H1 (cell line): ENCODE measurements at regions of chr15 and their contacts with region 1.

Region 1: GRCh38 chr15:41180206-41180789 is 50.3 kb downstream of the EXD1 start:
- DNase-seq: no peak
- H3K4me3 ChIP-seq: no peak overlapping the region
- H3K27ac ChIP-seq: no peak overlapping the region
- H3K4me1 ChIP-seq: peaks cover 0 to 3% (median 1%) of the 10 kb centered on the region in 4 experiments; a peak in 4 of 7 replicates
- H3K27me3 ChIP-seq: no peaks in the 10 kb centered on the region
- CTCF ChIP-seq: no peak
- EP300 ChIP-seq: no peak
- POLR2A ChIP-seq: no peak
- RAD21 ChIP-seq: no peak

Region 2: GRCh38 chr15:41194444-41194843 is 14.1 kb after region 1 on chr15:
- CTCF ChIA-PET with region 1: interaction called, 11 read pairs
- POLR2A ChIA-PET with region 1: interaction called, 7 read pairs
- DNase-seq: no peak
- H3K4me3 ChIP-seq: no peak overlapping the region
- H3K27ac ChIP-seq: no peak overlapping the region
- H3K4me1 ChIP-seq: no peaks in the 10 kb centered on the region
- H3K27me3 ChIP-seq: no peaks in the 10 kb centered on the region
- CTCF ChIP-seq: no peak
- EP300 ChIP-seq: no peak
- POLR2A ChIP-seq: no peak
- RAD21 ChIP-seq: no peak

Region 3: DNA sequence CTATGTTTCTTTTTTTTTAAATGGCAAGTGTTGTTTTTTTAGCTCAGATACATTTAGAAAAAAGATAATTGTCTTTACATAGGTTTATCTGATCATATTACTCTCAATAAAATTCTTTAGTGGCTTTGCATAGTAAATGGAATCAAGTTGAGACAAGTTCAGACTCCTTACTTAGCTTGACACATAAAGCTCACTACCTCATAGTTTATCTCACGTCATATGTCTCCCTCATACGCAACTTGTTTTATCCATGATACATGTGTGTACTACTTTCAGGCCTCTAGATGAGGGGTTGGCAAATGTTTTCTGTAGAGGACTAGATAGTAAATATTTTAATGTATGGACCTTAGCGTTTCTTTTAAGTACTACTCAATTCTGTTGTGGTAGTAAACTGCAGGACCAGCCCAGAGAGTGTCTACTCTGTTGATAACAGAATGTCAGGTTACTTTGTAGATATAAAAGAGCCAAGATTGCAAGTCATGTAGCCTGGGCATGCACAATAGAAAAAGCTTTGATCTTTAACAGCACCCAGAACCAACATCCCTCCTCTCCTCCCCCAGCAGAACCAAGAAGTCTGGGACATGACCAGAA is 451.7 kb after region 1 on chr15:
- CTCF ChIA-PET with region 1: no interaction called
- POLR2A ChIA-PET with region 1: no interaction called
- DNase-seq: no peak
- H3K4me3 ChIP-seq: no peak overlapping the region
- H3K27ac ChIP-seq: no peak overlapping the region
- H3K4me1 ChIP-seq: peaks cover 3 to 7% (median 5%) of the 10 kb centered on the region in 4 experiments; a peak in 6 of 7 replicates
- H3K27me3 ChIP-seq: no peaks in the 10 kb centered on the region
- CTCF ChIP-seq: no peak
- EP300 ChIP-seq: no peak
- POLR2A ChIP-seq: no peak
- RAD21 ChIP-seq: no peak